HepG2 (cell line): ENCODE measurements at regions of chr1 and their contacts with region 1.

Region 1: DNA sequence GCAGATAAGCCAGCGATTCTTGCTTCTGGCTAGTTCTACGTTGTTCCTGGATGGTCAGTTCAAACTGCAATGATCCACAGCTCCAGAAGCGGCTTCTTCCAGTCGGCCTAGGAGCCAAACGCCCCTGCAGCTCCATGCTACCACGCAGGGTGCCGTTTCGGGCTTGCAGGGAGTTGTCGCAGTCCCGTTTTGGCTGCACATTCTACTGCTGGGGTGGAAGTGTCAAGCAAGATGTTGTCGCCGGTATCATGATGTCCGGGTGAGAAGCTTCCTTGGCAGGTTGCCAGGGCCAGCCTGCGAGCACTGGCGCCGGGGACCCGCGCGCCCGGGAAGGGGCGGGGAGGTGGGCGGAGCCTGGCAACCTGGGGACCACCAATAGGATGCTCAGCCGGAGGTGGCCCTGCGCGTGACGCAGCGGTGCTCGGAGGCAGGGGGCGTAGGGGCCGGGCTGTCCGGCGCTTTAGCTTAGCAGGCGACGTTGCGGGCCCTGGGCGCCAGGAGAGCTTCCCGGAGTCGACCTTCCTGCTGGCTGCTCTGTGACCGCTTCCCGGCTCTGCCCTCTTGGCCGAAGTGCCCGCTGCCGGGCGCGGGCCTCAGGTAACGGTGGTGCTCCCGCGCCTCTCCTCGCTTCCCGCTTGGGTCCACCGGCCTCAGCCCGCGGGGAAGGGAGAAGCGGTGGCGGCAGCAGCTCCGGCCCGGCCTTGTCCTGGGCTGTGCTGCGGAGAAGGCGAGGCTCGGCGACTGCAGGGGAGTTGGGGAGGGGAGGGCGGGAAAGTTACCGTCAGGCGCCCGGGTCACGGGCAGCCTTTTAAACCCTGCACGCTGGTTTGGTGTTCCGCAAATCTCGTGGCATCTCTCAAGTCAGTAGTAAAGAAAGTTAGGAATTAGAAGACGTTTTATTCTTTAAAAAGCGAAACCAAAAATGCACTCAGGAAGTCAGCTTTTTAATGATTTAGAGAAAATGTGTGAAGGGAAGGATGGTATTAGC is at the start of gene SOAT1:
- DNase-seq: peak; percentile 91
- ATAC-seq: peak; percentile 96
- H3K4me3 ChIP-seq: peak within 1 kb of the TSS; percentile 77 to 89 (median 88)
- H3K27ac ChIP-seq: peak within 1 kb of the TSS; percentile 98
- H3K4me1 ChIP-seq: peaks cover 64% of the 10 kb centered on the region
- H3K27me3 ChIP-seq: no peaks in the 10 kb centered on the region
- CTCF ChIP-seq: peak; percentile 52
- EP300 ChIP-seq: no peak
- POLR2A ChIP-seq: peak; percentile 90 to 95
- RAD21 ChIP-seq: peak; percentile 36; the same call in 1 of the 2 replicates
- total RNA-seq, gene SOAT1: 40.2 and 52.0 TPM in 2 replicates

Region 2: DNA sequence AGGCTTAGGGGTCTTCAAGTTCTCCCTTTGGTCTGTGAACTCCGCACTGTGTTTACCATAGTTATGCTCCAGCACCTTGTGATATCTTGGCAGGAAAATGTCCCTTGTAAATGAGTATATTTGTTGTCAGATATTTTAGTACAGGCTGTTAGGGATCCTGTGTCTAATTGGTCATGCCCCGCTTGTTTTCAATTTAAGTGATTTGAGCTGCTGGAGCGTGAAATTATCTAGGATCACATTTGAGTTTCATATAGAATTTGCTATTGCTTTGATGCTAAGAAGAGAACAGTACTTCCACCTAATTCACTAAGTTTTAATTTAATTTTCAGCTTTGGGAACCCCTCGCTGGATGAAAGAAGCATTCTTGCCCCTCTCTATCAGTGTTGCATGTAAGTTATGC is 227.2 kb before region 1 on chr1:
- CTCF ChIA-PET with region 1: no interaction called
- POLR2A ChIA-PET with region 1: no interaction called
- in situ Hi-C with region 1: no loop called
- intact Hi-C with region 1: no loop called
- DNase-seq: no peak
- ATAC-seq: no peak
- H3K4me3 ChIP-seq: no peak overlapping the region
- H3K27ac ChIP-seq: no peak overlapping the region
- H3K4me1 ChIP-seq: no peaks in the 10 kb centered on the region
- H3K27me3 ChIP-seq: no peaks in the 10 kb centered on the region
- CTCF ChIP-seq: no peak
- EP300 ChIP-seq: no peak
- POLR2A ChIP-seq: no peak
- RAD21 ChIP-seq: no peak

Region 3: GRCh38 chr1:179081687-179082332 is 211.8 kb before region 1 on chr1 and contains the start of gene TOR3A:
- CTCF ChIA-PET with region 1: no interaction called
- POLR2A ChIA-PET with region 1: interaction called, 6 read pairs
- in situ Hi-C with region 1: no loop called
- intact Hi-C with region 1: loop called (anchors 1 kb)
- DNase-seq: peak; percentile 81
- ATAC-seq: peak; percentile 91
- H3K4me3 ChIP-seq: peak within 1 kb of the TSS; percentile 58 to 86 (median 85)
- H3K27ac ChIP-seq: peak within 1 kb of the TSS; percentile 77
- H3K4me1 ChIP-seq: peaks cover 39% of the 10 kb centered on the region
- H3K27me3 ChIP-seq: no peaks in the 10 kb centered on the region
- CTCF ChIP-seq: no peak
- EP300 ChIP-seq: 0 out of 4 replicates have a peak, but pooled peaks of 1 of the 2 experiments have one; percentile 3
- POLR2A ChIP-seq: peak; percentile 74 to 75
- RAD21 ChIP-seq: peak; percentile 50; the same call in 1 of the 2 replicates
- total RNA-seq, gene TOR3A: 21.2 and 28.4 TPM in 2 replicates

Region 4: DNA sequence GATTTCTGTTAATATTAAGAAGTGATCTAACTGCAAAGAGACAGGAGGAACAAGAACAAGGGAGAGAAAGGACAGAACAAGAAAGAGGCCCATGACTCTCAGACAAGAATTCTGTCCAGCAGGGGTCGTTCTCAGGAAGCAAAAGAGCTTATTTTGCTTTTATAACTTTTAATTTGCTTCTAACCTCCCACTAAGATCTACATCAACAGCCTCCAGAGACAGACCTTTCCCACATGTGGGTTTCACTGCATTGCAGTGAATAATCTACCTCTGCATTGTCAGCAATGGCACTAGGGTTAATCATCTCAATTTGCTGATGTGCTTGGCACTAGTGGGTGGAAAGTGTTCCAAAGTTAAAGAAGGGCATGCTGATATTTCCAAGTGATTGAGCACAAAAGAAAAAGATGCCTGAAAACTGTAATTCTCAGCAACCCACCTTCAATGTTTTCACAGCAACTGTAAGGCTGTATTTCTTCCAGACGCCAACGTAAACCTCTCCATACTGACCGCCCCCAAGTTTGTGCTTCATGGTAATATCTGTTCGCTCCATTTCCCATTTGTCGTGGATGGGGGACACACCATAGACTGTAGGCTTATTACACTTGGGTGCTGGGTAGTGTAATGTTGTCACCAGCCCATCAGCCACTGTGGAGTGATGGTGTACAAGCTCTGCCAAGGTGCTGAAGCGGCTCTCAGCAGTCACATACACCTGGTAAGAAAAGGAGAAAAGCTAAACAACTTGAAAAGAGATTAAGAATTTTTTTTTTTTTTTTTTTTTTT is 172.3 kb before region 1 on chr1:
- CTCF ChIA-PET with region 1: no interaction called
- POLR2A ChIA-PET with region 1: no interaction called
- in situ Hi-C with region 1: loop called (anchors 10 kb)
- intact Hi-C with region 1: loop called (anchors 1 kb)
- DNase-seq: peak; percentile 25
- ATAC-seq: peak; percentile 48
- H3K4me3 ChIP-seq: no peak overlapping the region
- H3K27ac ChIP-seq: no peak overlapping the region
- H3K4me1 ChIP-seq: no peaks in the 10 kb centered on the region
- H3K27me3 ChIP-seq: no peaks in the 10 kb centered on the region
- CTCF ChIP-seq: peak; percentile 62
- EP300 ChIP-seq: no peak
- POLR2A ChIP-seq: no peak
- RAD21 ChIP-seq: peak; percentile 55

Region 5: DNA sequence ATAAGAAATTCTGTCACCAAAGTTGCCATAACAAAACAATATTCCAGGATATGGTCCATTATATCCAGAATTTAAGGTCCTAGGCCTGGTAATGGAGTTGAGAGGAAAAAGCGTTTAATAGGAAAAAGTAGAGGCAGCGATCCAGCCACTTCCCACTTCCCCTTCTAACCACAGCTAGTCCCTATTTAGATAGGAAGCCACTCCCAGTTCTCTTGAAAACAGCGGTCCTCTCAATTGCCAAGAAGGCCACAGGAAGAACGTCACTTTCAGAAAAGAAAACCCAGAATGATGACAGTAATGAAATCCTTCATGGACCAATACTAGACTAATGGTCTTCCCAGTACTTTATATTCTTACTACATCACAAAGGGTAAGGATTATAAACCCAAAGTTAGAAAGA is 102.8 kb before region 1 on chr1:
- CTCF ChIA-PET with region 1: no interaction called
- POLR2A ChIA-PET with region 1: no interaction called
- in situ Hi-C with region 1: no loop called
- intact Hi-C with region 1: loop called (anchors 10 kb)
- DNase-seq: no peak
- ATAC-seq: no peak
- H3K4me3 ChIP-seq: no peak overlapping the region
- H3K27ac ChIP-seq: no peak overlapping the region
- H3K4me1 ChIP-seq: peaks cover 21% of the 10 kb centered on the region
- H3K27me3 ChIP-seq: no peaks in the 10 kb centered on the region
- CTCF ChIP-seq: no peak
- EP300 ChIP-seq: no peak
- POLR2A ChIP-seq: no peak
- RAD21 ChIP-seq: no peak

Region 6: GRCh38 chr1:179229214-179230140 is 64.2 kb before region 1 on chr1 and contains the start of gene ABL2:
- CTCF ChIA-PET with region 1: no interaction called
- POLR2A ChIA-PET with region 1: interaction called, 4 read pairs
- in situ Hi-C with region 1: no loop called
- intact Hi-C with region 1: loop called (anchors 5 kb)
- DNase-seq: peak; percentile 18
- ATAC-seq: peak; percentile 75
- H3K4me3 ChIP-seq: peak within 1 kb of the TSS; percentile 88 to 96 (median 96)
- H3K27ac ChIP-seq: peak within 1 kb of the TSS; percentile 87
- H3K4me1 ChIP-seq: peaks cover 68% of the 10 kb centered on the region
- H3K27me3 ChIP-seq: no peaks in the 10 kb centered on the region; a peak in 1 of 5 replicates
- CTCF ChIP-seq: no peak
- EP300 ChIP-seq: no peak
- POLR2A ChIP-seq: peak in 1 of 2 experiments; percentile 44; a peak in 1 of 4 replicates
- RAD21 ChIP-seq: 0 out of 2 replicates have a peak, but pooled peaks have one; percentile 16
- total RNA-seq, gene ABL2: 6.0 and 11.6 TPM in 2 replicates

Region 7: DNA sequence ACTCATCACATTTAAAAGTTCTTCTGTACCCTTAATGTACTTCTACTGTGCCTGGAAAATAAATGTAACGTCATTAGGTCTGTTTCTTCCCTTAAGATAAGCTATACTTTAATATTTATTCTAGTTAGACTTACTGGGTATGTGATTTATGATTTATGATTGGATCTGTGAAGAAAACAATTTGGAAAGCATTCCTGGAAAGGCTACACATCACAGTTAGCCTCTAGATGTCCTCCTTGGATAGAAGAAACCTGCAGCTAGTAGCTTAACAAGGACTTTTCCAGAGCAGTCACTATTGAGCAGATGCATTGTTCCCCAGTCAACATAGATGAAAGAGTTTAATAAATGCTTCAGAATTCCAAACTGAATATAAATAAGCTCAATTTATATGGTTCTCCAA is 42.0 kb before region 1 on chr1:
- CTCF ChIA-PET with region 1: interaction called, 3 read pairs
- POLR2A ChIA-PET with region 1: no interaction called
- in situ Hi-C with region 1: no loop called
- intact Hi-C with region 1: loop called (anchors 1 kb)
- DNase-seq: peak; percentile 44
- ATAC-seq: peak; percentile 92
- H3K4me3 ChIP-seq: no peak overlapping the region
- H3K27ac ChIP-seq: no peak overlapping the region
- H3K4me1 ChIP-seq: no peaks in the 10 kb centered on the region
- H3K27me3 ChIP-seq: no peaks in the 10 kb centered on the region
- CTCF ChIP-seq: peak; percentile 72
- EP300 ChIP-seq: no peak
- POLR2A ChIP-seq: no peak
- RAD21 ChIP-seq: peak; percentile 65

Region 8: DNA sequence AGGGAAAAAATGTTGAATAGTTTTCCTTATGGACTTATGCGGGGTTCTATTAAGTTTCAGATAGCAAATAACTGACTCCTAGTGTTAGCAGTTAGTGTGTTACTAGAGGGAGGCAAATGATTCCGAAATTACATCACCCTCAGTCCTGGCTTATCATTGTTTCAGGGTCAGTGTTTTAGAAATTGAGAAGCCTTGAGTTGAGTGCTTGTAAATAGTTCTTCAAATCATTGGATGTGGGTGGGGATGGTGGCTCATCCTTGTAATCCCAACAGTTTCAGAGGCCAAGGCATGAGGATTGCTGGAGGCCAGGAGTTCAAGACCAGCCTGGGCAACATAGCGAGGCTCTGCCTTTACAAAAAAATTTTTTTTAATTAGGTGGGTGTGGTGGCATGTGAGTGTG is 21.3 kb after region 1 on chr1:
- CTCF ChIA-PET with region 1: no interaction called
- POLR2A ChIA-PET with region 1: no interaction called
- in situ Hi-C with region 1: no loop called
- intact Hi-C with region 1: no loop called
- DNase-seq: no peak
- ATAC-seq: no peak
- H3K4me3 ChIP-seq: no peak overlapping the region
- H3K27ac ChIP-seq: no peak overlapping the region
- H3K4me1 ChIP-seq: no peaks in the 10 kb centered on the region
- H3K27me3 ChIP-seq: no peaks in the 10 kb centered on the region
- CTCF ChIP-seq: no peak
- EP300 ChIP-seq: no peak
- POLR2A ChIP-seq: no peak
- RAD21 ChIP-seq: no peak

Region 9: DNA sequence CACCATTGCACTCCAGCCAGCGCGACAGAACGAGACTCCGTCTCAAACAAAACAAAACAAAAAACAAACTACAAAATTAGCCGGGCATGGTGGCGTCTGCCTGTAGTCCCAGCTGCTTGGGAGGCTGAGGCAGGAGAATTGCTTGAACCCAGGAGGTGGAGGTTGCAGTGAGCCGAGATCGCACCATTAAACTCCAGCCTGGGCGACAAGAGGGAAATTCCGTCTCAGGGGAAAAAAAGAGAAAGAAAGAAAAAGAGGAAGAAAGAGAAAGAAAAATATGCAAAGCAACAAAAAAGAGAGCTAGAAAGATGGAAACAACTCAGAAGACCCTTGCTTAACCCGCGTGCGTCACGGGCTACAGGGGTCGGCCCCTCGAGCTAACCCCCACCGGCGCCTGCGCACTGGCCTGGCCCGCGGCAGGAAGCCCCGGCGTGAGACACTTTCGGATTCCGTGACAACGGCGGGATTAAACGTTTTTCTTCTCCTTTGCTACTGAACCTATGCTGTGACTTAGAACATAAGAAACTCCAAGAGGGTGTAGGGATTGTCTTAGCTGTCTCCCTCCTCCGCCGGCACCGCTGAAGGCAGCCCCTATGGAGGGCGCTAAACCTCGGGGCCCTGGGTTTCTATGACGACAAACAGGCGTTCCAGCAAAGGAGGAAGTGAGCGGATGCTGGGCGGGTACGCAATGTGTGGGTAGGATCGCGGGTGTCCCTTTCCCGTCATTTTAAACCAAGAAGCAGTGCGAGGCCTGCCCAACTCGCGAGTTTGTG is 71.9 kb after region 1 on chr1 and contains the start of gene AXDND1:
- CTCF ChIA-PET with region 1: no interaction called
- POLR2A ChIA-PET with region 1: interaction called, 8 read pairs
- in situ Hi-C with region 1: no loop called
- intact Hi-C with region 1: loop called (anchors 5 kb)
- DNase-seq: peak; percentile 68
- ATAC-seq: peak; percentile 93
- H3K4me3 ChIP-seq: peak within 1 kb of the TSS; percentile 63 to 86 (median 73)
- H3K27ac ChIP-seq: peak within 1 kb of the TSS; percentile 65
- H3K4me1 ChIP-seq: peaks cover 18% of the 10 kb centered on the region; the same call in 1 of the 2 replicates
- H3K27me3 ChIP-seq: no peaks in the 10 kb centered on the region
- CTCF ChIP-seq: peak; percentile 33; the same call in 1 of the 2 replicates
- EP300 ChIP-seq: no peak
- POLR2A ChIP-seq: peak; percentile 30 to 74; a peak in 2 of 4 replicates
- RAD21 ChIP-seq: no peak
- total RNA-seq, gene AXDND1: 0.14 and 0.40 TPM in 2 replicates

Region 10: DNA sequence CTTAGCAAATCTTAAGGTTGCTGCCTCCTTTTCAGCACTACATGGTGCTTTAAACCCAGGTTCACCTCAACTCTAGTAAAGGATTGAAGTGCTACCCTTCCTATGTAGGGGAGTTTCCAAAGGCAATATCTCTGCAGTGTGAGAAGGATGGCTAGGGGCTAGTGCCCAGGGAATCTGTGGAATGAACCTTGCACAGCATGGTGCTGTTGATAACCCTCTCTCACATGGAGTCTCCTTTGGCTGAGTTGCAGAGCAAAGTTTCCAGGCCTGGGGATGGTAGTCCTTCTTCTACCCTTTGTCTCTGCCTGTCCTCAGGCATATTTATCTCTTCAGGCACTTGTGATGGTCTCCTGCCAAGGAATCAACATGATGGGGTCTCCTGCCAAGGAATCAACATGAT is 131.6 kb after region 1 on chr1:
- CTCF ChIA-PET with region 1: no interaction called
- POLR2A ChIA-PET with region 1: no interaction called
- in situ Hi-C with region 1: no loop called
- intact Hi-C with region 1: no loop called
- DNase-seq: no peak
- ATAC-seq: no peak
- H3K4me3 ChIP-seq: no peak overlapping the region
- H3K27ac ChIP-seq: no peak overlapping the region
- H3K4me1 ChIP-seq: no peaks in the 10 kb centered on the region
- H3K27me3 ChIP-seq: no peaks in the 10 kb centered on the region
- CTCF ChIP-seq: no peak
- EP300 ChIP-seq: no peak
- POLR2A ChIP-seq: no peak
- RAD21 ChIP-seq: no peak